ENCODE measurements at regions of chr3 and their contacts with region 1.

Region 1: GRCh38 chr3:127172781-127173515 is 20.0 kb upstream of the PRR23E start:
- DNase-seq: peak; percentile 65
- H3K4me3 Mint-ChIP-seq: no peak overlapping the region
- H3K27ac Mint-ChIP-seq: no peak overlapping the region
- H3K4me1 Mint-ChIP-seq: no peaks in the 10 kb centered on the region
- H3K27me3 Mint-ChIP-seq: peaks cover 84% of the 10 kb centered on the region
- CTCF ChIP-seq: no peak

Region 2: DNA sequence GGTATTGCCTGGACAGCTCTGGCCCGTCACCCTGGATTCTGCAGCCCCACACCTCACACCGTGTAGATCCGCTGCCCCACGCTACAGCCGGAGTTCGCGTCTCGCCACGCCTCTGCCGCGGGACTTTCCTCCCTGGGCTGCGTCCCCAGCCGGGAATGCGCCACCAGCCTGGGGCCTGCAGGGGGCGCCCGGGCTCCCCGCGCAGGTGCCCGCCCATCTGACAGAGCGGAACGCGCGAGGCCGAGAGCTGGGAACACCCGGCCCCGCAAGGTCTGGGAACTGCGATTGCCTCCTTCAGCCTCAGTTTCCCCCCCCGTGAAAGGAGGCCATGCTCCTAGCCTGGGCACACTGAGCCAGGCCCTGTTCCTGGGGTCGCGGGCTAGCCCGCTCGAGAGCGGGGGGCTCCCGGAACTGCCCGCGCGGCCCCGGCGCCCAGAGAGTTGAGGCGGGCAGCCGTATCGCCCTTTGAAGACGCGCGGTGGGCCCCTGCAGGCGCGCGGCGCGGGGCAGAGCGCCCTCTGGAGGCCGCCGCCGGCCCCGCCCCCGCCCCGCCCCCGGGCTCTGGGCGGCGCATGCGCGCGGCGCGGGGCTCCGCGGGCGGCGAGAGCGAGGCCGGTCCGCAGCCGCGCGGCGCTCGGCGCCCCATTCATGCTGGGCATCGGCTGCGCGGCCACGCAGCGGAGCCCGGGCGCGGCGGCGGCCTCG is 190.3 kb before region 1 on chr3 and contains the start of gene PLXNA1:
- CTCF ChIA-PET with region 1: interaction called, 4 read pairs
- intact Hi-C with region 1: loop called (anchors 10 kb)
- DNase-seq: peak; percentile 91
- H3K4me3 Mint-ChIP-seq: peak within 1 kb of the TSS; percentile 75
- H3K27ac Mint-ChIP-seq: no peak within 1 kb of the TSS
- H3K4me1 Mint-ChIP-seq: peaks cover 25% of the 10 kb centered on the region
- H3K27me3 Mint-ChIP-seq: peaks cover 32% of the 10 kb centered on the region
- CTCF ChIP-seq: peak; percentile 99
- total RNA-seq, gene PLXNA1: 81.1 and 84.3 TPM in 2 replicates

Region 3: DNA sequence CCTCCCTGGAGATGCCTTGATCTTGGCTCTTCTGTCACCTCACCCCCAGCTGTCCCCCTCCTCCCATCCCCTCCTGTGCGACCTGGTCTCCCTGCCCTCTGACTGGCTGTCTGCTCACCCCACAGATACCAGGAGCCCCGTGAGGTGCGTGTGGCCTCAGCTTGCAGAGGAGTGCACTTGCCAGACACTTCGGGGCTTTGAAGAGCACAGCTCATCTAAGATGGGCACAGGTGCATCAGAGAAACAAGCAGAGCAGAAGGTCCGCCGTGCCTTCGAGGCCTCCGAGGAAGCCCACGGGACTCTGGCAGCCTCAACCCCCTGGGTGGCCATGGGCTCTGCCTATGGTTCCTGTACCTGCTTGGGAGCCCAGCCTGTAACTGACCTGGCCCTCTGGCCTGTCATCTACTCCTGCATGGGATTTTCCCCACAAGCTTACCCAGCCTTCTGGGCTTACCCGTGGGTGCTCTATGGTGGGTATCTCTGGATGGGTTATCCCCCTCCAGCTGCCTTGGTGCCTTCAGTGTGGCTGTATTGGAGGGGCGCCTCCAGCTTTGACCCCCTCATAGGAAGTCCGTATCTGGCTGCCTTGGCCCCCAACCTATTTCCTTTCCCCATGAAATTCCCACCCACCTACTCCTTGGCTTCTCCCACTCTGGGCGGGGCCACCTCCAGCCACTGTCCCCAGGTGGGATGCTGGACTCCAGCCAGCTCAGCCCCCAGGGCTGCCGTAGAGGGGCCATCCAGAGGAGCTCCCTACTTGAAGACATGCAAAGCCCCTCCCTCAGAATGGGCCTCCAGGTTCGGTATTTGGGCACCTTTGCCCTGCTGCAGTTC is 23.7 kb after region 1 on chr3:
- CTCF ChIA-PET with region 1: no interaction called
- intact Hi-C with region 1: no loop called
- DNase-seq: no peak
- H3K4me3 Mint-ChIP-seq: no peak overlapping the region
- H3K27ac Mint-ChIP-seq: no peak overlapping the region
- H3K4me1 Mint-ChIP-seq: no peaks in the 10 kb centered on the region
- H3K27me3 Mint-ChIP-seq: peaks cover 73% of the 10 kb centered on the region
- CTCF ChIP-seq: no peak

Region 4: DNA sequence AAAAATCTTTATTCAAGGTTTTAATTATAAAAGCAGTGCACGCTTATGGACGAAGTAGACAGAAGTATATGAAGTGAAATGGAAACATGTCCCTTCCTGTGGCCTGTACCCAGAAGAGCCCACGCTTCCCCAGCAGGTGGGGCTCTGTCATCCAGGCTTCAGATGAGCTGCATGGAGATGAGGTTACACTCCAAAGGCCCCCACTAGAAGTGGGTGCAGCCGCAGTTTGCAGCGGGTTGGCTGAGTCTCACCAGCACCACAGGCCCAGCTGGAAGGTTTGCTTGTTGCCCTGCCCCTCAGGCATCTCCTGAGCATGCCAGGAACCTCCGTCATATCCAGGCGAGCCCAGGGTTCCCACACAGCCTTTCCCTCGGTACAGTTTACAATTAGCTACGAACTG is 81.8 kb after region 1 on chr3:
- CTCF ChIA-PET with region 1: no interaction called
- intact Hi-C with region 1: no loop called
- DNase-seq: peak; percentile 57
- H3K4me3 Mint-ChIP-seq: no peak overlapping the region
- H3K27ac Mint-ChIP-seq: no peak overlapping the region
- H3K4me1 Mint-ChIP-seq: no peaks in the 10 kb centered on the region
- H3K27me3 Mint-ChIP-seq: peaks cover 81% of the 10 kb centered on the region
- CTCF ChIP-seq: peak; percentile 60

Measured in Calu3 (cell line).